ENCODE measurements at regions of chr11 and their contacts with region 1.

Region 1: GRCh38 chr11:6234387-6235107 is at the start of gene FHIP1B:
- DNase-seq: peak; percentile 100
- H3K4me3 Mint-ChIP-seq: peak within 1 kb of the TSS; percentile 94
- H3K27ac Mint-ChIP-seq: peak within 1 kb of the TSS; percentile 82
- H3K4me1 Mint-ChIP-seq: peaks cover 32% of the 10 kb centered on the region
- H3K27me3 Mint-ChIP-seq: no peaks in the 10 kb centered on the region
- total RNA-seq, gene FHIP1B: 13.0 to 13.1 TPM

Region 2: GRCh38 chr11:5684646-5685362 is 549.7 kb before region 1 on chr11 and contains the start of gene TRIM5:
- CTCF ChIA-PET with region 1: no interaction called
- intact Hi-C with region 1: loop called (anchors 2 kb)
- DNase-seq: peak; percentile 92
- H3K4me3 Mint-ChIP-seq: peak within 1 kb of the TSS; percentile 96
- H3K27ac Mint-ChIP-seq: peak within 1 kb of the TSS; percentile 95
- H3K4me1 Mint-ChIP-seq: peaks cover 42% of the 10 kb centered on the region
- H3K27me3 Mint-ChIP-seq: no peaks in the 10 kb centered on the region
- total RNA-seq, gene TRIM5: 37.2 to 38.0 TPM

Region 3: DNA sequence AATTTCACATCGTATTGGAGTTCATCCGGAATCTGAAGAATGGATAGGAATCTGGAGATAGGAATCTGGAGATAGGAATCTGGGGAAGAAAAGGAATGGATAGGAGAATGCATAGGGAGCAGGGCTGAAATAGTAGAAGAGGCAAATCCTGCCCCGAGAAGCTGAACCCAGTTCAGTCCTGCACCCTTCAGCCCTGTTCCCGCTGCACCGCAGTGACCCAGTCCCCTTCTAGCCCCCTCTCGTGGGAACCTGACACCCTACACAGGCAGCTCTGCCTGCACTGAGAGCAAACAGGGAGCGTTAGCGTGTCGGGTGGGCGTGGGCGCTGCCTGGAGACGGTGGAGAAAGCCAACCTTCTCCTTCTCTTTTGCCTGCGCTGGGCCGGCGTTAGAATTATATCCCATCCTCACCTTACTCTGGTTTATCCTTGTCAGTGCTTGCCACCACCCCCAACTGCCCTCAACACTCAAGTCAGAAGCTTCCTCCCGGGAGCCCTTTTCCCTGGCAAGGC is 24.1 kb after region 1 on chr11:
- CTCF ChIA-PET with region 1: no interaction called
- intact Hi-C with region 1: loop called (anchors 1 kb)
- DNase-seq: peak; percentile 13
- H3K4me3 Mint-ChIP-seq: no peak overlapping the region
- H3K27ac Mint-ChIP-seq: no peak overlapping the region
- H3K4me1 Mint-ChIP-seq: no peaks in the 10 kb centered on the region
- H3K27me3 Mint-ChIP-seq: peaks cover 7% of the 10 kb centered on the region

Region 4: DNA sequence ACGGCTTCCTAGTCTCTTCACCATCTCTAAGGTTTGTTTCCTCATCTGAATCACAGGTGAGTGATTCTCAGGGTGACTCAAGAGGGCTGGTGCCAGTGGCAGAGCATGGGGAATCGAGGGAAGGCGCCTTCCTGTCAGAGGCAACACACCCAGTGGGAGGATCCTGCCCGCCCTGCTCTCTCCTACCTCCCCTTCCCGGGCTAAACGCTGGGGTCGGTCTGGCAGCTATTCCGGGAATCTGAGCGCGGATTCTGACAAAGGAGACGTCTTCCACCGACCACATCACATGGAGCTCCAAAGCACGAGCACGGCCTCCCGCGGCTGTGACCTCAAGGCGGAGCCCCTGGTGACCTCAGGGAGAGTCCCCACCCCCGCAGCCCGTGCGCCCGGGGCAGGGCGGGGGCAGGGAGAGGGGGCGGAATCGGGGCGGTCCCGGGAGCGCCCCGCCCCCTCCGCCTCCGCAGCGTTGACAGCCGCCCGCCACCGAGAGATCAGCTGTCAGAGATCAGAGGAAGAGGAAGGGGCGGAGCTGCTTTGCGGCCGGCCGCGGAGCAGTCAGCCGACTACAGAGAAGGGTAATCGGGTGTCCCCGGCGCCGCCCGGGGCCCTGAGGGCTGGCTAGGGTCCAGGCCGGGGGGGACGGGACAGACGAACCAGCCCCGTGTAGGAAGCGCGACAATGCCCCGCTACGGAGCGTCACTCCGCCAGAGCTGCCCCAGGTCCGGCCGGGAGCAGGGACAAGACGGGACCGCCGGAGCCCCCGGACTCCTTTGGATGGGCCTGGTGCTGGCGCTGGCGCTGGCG is 155.6 kb after region 1 on chr11 and contains the start of gene SMPD1:
- CTCF ChIA-PET with region 1: no interaction called
- intact Hi-C with region 1: loop called (anchors 1 kb)
- DNase-seq: peak; percentile 95
- H3K4me3 Mint-ChIP-seq: peak within 1 kb of the TSS; percentile 91
- H3K27ac Mint-ChIP-seq: peak within 1 kb of the TSS; percentile 98
- H3K4me1 Mint-ChIP-seq: peaks cover 46% of the 10 kb centered on the region
- H3K27me3 Mint-ChIP-seq: no peaks in the 10 kb centered on the region
- total RNA-seq, gene SMPD1: 24.5 to 27.5 TPM

Region 5: GRCh38 chr11:6603287-6604080 is 368.9 kb after region 1 on chr11 and contains the starts of genes ILK and RRP8:
- CTCF ChIA-PET with region 1: no interaction called
- intact Hi-C with region 1: loop called (anchors 1 kb)
- DNase-seq: peak; percentile 92
- H3K4me3 Mint-ChIP-seq: no peak within 1 kb of the TSS
- H3K27ac Mint-ChIP-seq: no peak within 1 kb of the TSS
- H3K4me1 Mint-ChIP-seq: peaks cover 33% of the 10 kb centered on the region
- H3K27me3 Mint-ChIP-seq: no peaks in the 10 kb centered on the region
- total RNA-seq, gene ILK: 65.2 to 65.7 TPM
- total RNA-seq, gene RRP8: 31.9 to 33.5 TPM

Region 6: GRCh38 chr11:6746086-6746618 is 511.6 kb after region 1 on chr11:
- CTCF ChIA-PET with region 1: no interaction called
- intact Hi-C with region 1: loop called (anchors 10 kb)
- DNase-seq: peak; percentile 60
- H3K4me3 Mint-ChIP-seq: no peak overlapping the region
- H3K27ac Mint-ChIP-seq: no peak overlapping the region
- H3K4me1 Mint-ChIP-seq: peaks cover 28% of the 10 kb centered on the region
- H3K27me3 Mint-ChIP-seq: no peaks in the 10 kb centered on the region

Measured in activated naive CD4-positive, alpha-beta T cell treated with anti-CD3 and anti-CD28 coated beads for 36 hours (primary cell).